Panc1 (cell line): ENCODE measurements at regions of chr1 and their contacts with region 1.

Region 1: GRCh38 chr1:226579781-226580323 is 31.3 kb downstream of the STUM start:
- DNase-seq: no peak
- ATAC-seq: no peak
- H3K4me3 ChIP-seq: no peak overlapping the region
- H3K27ac ChIP-seq: no peak overlapping the region
- H3K4me1 ChIP-seq: no peaks in the 10 kb centered on the region
- H3K27me3 ChIP-seq: 0 out of 2 replicates have a peak, but pooled peaks cover 3% of the 10 kb centered on the region
- CTCF ChIP-seq: no peak

Region 2: DNA sequence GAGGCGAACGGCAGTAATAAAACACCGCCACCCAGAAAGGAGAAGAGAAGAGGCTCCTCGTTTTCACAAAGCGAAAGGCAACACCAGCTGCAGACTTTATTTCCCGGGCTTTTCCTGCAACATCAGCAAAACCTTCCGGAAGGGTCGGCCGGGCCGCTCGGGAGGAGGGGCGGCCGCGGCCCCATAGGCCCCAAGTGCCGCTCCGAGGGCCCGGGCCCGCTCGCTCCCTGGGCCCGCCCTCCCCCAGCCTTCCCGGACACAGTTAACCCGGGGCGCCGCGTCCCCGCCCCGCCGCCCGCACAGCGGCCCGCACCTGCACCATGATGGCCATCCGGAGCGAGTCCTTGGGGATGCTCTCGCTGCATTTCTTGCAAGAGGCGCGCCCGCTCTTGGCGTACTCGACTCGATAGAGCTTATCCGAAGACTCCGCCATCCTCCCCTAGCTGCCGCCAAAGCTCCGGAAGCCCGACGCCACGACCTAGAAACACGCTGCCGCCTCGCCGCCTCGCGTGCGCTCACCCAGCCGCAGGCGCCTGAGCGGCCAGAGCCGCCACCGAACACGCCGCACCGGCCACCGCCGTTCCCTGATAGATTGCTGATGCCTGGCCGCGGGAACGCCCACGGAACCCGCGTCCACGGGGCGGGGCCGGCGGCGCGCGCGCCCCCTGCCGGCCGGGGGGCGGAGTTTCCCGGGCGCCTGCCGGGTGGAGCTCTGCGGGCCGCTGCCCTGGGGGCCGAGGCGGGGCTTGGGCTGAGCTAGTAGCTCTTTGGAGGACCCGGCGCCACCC is 172.2 kb before region 1 on chr1 and contains the start of gene PARP1:
- CTCF ChIA-PET with region 1: no interaction called
- POLR2A ChIA-PET with region 1: interaction called, 19 read pairs
- in situ Hi-C with region 1: no loop called
- intact Hi-C with region 1: no loop called
- DNase-seq: no peak
- ATAC-seq: peak; percentile 94
- H3K4me3 ChIP-seq: peak within 1 kb of the TSS; percentile 76 to 94
- H3K27ac ChIP-seq: peak within 1 kb of the TSS; percentile 84
- H3K4me1 ChIP-seq: peaks cover 25% of the 10 kb centered on the region
- H3K27me3 ChIP-seq: no peaks in the 10 kb centered on the region
- CTCF ChIP-seq: peak; percentile 97
- total RNA-seq, gene PARP1: 127 TPM

Region 3: DNA sequence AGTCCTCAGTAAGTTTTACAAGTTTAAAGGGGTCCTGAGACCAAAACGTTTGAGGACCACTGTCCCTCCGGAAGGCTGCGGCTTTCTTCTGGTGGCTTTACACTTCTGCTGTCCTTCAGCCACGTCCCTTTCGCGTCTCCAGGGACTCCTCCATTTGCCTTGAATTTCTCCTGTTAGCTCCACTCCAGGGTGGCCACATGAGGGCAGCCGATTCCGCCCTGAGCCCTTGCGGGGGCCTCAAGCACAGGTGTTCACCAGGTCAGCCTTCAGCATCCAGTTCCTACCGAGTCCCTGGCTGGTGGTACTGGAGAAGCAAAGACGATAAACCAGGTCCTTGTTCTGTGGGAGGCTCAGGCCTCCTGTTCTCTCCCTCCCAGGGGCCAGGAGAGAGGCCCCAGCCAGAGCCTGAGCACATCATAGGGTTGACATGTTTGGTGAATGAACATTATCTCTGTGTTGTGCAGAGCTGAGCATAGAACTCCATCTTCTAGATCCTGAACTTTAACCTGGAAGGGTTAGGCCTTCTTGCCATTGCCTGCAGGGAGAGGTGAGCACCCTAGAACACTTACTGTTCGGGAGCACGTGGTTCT is 332.8 kb after region 1 on chr1:
- CTCF ChIA-PET with region 1: no interaction called
- POLR2A ChIA-PET with region 1: no interaction called
- in situ Hi-C with region 1: no loop called
- intact Hi-C with region 1: no loop called
- DNase-seq: peak; percentile 12
- ATAC-seq: peak; percentile 94
- H3K4me3 ChIP-seq: no peak overlapping the region
- H3K27ac ChIP-seq: no peak overlapping the region
- H3K4me1 ChIP-seq: no peaks in the 10 kb centered on the region
- H3K27me3 ChIP-seq: no peaks in the 10 kb centered on the region
- CTCF ChIP-seq: peak; percentile 90